ENCODE measurements at regions of chr6 and their contacts with region 1.

Region 1: DNA sequence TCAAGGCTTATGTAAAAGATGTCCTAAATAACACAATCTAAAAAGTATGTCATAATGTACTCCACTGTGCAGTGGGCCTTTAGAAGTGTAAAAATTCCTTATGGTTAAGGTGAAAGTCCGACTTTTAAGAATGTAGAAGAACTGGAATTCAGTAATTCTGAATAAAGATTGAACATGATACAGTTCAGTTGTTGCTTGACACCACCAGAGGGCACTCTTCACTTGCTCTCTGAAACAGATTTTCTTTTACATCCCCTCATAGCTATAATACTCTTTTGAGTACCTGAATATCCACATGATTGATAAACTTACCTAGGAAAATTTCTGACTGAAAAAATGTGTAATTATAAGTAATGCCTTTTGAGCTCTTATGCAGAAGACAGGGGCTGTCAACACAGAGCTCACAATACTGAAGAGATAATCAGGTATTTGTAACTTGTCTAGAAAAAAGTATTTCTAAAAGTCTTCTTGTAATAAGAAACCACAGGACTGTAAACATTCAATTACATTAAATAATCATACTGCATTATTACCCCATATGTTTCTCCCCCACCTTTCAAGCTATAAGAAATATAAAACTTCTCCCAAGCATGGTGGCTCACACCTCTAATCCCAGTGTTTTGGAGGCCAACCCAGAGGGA is 92.1 kb downstream of the POPDC3 start:
- DNase-seq: peak; percentile 17
- ATAC-seq: peak; percentile 82
- H3K4me3 ChIP-seq: no peak overlapping the region
- H3K27ac ChIP-seq: no peak overlapping the region
- H3K4me1 ChIP-seq: no peaks in the 10 kb centered on the region
- H3K27me3 ChIP-seq: no peaks in the 10 kb centered on the region
- CTCF ChIP-seq: peak; percentile 71 to 87 (median 77); a peak in 5 of 6 replicates
- EP300 ChIP-seq: no peak
- POLR2A ChIP-seq: no peak
- RAD21 ChIP-seq: peak; percentile 92

Region 2: DNA sequence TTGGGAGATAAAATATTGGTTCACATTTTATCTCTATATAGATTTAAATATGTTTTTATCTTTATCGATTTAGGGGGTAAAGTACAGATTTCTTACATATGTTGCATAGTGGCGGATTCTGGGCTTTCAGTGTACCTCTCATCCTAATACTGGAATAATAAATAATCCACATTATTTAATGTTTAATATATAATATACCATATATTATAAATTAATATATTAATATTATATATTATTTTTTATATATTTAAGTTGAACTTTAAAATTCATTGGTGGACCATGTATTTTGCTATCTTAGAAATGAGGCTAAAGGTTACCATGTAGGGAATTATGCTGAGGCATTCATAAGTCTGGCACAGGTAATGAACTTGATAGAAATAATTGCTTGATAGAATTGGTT is 181.7 kb after region 1 on chr6:
- CTCF ChIA-PET with region 1: no interaction called
- POLR2A ChIA-PET with region 1: no interaction called
- RAD21 ChIA-PET with region 1: interaction called, 3 read pairs
- SMC1A ChIA-PET with region 1: no interaction called
- in situ Hi-C with region 1: no loop called
- intact Hi-C with region 1: loop called (anchors 5 kb)
- DNase-seq: no peak
- ATAC-seq: no peak
- H3K4me3 ChIP-seq: no peak overlapping the region
- H3K27ac ChIP-seq: no peak overlapping the region
- H3K4me1 ChIP-seq: no peaks in the 10 kb centered on the region
- H3K27me3 ChIP-seq: no peaks in the 10 kb centered on the region
- CTCF ChIP-seq: no peak
- EP300 ChIP-seq: no peak
- POLR2A ChIP-seq: no peak
- RAD21 ChIP-seq: no peak

Region 3: DNA sequence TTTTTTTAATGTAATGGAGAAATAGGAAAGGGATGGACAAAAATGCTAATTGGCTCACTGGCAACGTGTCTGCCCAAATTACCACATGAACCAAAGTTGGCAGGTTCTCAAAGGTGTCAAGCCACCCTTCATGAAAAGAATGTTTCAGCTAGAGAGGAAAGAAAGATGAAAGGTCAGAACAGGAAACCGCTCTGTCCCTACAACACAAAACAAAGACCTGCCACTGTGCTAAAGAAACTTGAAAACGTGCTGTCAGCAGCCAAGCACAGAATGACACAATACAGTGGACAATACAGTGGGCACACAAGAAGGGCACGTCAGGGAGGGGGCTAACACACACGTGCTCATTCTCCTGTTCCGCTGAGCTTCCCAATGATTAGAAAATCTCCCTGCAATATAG is 310.3 kb after region 1 on chr6:
- CTCF ChIA-PET with region 1: interaction called, 14 read pairs
- POLR2A ChIA-PET with region 1: interaction called, 4 read pairs
- RAD21 ChIA-PET with region 1: interaction called, 12 read pairs
- SMC1A ChIA-PET with region 1: interaction called, 13 read pairs
- in situ Hi-C with region 1: no loop called
- intact Hi-C with region 1: loop called (anchors 1 kb)
- DNase-seq: no peak
- ATAC-seq: no peak
- H3K4me3 ChIP-seq: no peak overlapping the region
- H3K27ac ChIP-seq: no peak overlapping the region
- H3K4me1 ChIP-seq: peaks cover 2% of the 10 kb centered on the region; the same call in 1 of the 2 replicates
- H3K27me3 ChIP-seq: no peaks in the 10 kb centered on the region
- CTCF ChIP-seq: no peak
- EP300 ChIP-seq: no peak
- POLR2A ChIP-seq: no peak
- RAD21 ChIP-seq: no peak

Region 4: DNA sequence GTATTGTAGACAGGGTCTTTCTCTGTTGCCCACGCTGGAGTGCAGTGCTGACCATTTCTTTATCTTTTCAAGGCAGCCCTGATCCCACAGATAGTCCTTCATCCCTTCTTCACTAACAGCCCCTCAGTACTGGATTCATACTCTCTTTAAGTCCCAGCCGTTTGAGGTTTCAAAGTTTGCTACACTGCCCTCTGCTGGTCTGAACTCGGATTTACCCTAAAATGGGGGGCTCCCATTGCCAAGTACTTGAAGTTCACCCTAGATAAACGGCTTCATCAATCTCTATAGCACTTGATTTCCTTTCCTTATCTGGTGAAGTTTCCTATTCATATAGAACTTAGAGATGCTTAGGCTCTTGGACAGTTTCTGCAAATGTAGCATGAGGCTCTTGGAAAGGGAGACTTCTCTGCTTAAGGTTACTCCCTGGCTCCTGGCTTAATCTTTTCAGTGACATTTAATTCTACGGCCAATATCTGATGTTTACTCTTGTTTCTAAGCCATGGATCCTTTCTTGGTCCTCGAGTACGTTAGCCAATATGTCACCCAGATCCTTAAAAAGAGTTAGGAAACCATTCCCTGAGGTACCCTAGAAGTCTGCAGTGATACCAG is 336.6 kb after region 1 on chr6:
- CTCF ChIA-PET with region 1: interaction called, 43 read pairs
- POLR2A ChIA-PET with region 1: no interaction called
- RAD21 ChIA-PET with region 1: interaction called, 14 read pairs
- SMC1A ChIA-PET with region 1: interaction called, 24 read pairs
- in situ Hi-C with region 1: loop called (anchors 5 kb)
- intact Hi-C with region 1: loop called (anchors 1 kb)
- DNase-seq: no peak
- ATAC-seq: peak; percentile 96
- H3K4me3 ChIP-seq: no peak overlapping the region
- H3K27ac ChIP-seq: no peak overlapping the region
- H3K4me1 ChIP-seq: peaks cover 3% of the 10 kb centered on the region
- H3K27me3 ChIP-seq: no peaks in the 10 kb centered on the region
- CTCF ChIP-seq: peak; percentile 67 to 71 (median 70)
- EP300 ChIP-seq: no peak
- POLR2A ChIP-seq: no peak
- RAD21 ChIP-seq: peak; percentile 59

Region 5: GRCh38 chr6:106273087-106273486 is 1185.4 kb after region 1 on chr6:
- CTCF ChIA-PET with region 1: interaction called, 4 read pairs
- POLR2A ChIA-PET with region 1: no interaction called
- RAD21 ChIA-PET with region 1: no interaction called
- SMC1A ChIA-PET with region 1: no interaction called
- in situ Hi-C with region 1: loop called (anchors 25 kb)
- intact Hi-C with region 1: no loop called
- DNase-seq: peak; percentile 4
- ATAC-seq: peak; percentile 61
- H3K4me3 ChIP-seq: no peak overlapping the region
- H3K27ac ChIP-seq: no peak overlapping the region
- H3K4me1 ChIP-seq: peaks cover 23% of the 10 kb centered on the region
- H3K27me3 ChIP-seq: no peaks in the 10 kb centered on the region
- CTCF ChIP-seq: 0 out of 6 replicates have a peak, but pooled peaks of 2 of the 3 experiments have one; percentile 6 to 20
- EP300 ChIP-seq: no peak
- POLR2A ChIP-seq: no peak
- RAD21 ChIP-seq: peak; percentile 28; the same call in 1 of the 2 replicates

Measured in GM12878 (cell line).